ENCODE measurements at regions of chr5 and their contacts with region 1.

Region 1: DNA sequence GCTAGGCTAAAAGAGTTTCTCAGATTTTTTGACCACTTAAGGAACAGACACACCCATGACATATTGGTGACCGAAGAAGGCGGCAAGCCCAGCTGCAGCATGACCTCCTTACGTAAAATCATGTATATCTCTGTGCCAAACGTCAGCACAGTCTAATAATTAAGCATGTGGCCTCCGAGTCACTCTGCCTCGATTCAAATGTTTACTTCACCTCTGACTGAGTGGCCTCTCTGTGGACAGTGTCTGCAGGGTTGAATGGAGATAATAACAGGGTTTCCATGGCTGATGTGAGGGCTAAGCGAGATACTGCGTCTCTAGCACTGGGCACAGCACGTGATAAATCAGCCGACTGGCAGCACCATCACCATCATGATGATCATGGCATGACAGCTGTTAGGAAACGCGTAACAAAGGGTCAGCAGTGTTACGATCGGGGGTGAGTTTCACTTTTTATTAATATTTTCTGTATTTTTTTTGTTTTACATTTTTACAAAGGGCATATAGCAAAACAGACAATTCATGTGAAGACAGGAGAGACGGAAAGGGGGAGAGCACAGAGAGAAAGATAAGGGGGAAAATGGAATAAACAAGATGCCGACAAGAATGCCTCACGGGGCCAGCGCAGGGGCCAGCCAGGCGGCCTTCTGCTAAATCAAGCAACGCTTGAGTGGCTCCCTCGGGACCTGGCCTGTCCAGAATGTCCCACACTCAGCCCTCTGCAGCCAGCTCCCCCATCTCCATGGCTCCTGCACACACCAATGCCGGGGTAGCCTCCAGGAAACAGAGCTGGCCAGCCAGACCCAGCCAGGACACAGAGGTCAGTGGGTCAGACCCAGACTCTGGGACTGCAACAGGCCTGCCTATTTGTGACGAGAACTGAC is 60.3 kb downstream of the ADAMTS2 start:
- DNase-seq: no peak
- H3K27ac ChIP-seq: no peak overlapping the region
- CTCF ChIP-seq: no peak

Region 2: GRCh38 chr5:178695556-178695955 is 589.4 kb before region 1 on chr5:
- CTCF ChIA-PET with region 1: no interaction called
- POLR2A ChIA-PET with region 1: no interaction called
- DNase-seq: peak; percentile 45
- H3K27ac ChIP-seq: no peak overlapping the region
- CTCF ChIP-seq: no peak

Region 3: GRCh38 chr5:179294891-179295772 is 10.1 kb after region 1 on chr5:
- CTCF ChIA-PET with region 1: no interaction called
- POLR2A ChIA-PET with region 1: no interaction called
- DNase-seq: no peak
- H3K27ac ChIP-seq: no peak overlapping the region
- CTCF ChIP-seq: no peak

Region 4: GRCh38 chr5:179306191-179306590 is 21.2 kb after region 1 on chr5:
- CTCF ChIA-PET with region 1: no interaction called
- POLR2A ChIA-PET with region 1: interaction called, 10 read pairs
- DNase-seq: no peak
- H3K27ac ChIP-seq: no peak overlapping the region
- CTCF ChIP-seq: no peak

Measured in RWPE1 (cell line).